Dendritic cell treated with granulocyte-macrophage colony-stimulating factor and Interleukin-4, amounts not matched to agents 40 ng/mL and 50 ng/mL, for 4 days (primary cell): ENCODE measurements at regions of chr3 and their contacts with region 1.

Region 1: GRCh38 chr3:25723802-25724201 is 59.1 kb upstream of the TOP2B start:
- H3K4me3 Mint-ChIP-seq: no peak overlapping the region
- H3K27ac Mint-ChIP-seq: no peak overlapping the region
- H3K4me1 Mint-ChIP-seq: no peaks in the 10 kb centered on the region
- H3K27me3 Mint-ChIP-seq: no peaks in the 10 kb centered on the region

Region 2: DNA sequence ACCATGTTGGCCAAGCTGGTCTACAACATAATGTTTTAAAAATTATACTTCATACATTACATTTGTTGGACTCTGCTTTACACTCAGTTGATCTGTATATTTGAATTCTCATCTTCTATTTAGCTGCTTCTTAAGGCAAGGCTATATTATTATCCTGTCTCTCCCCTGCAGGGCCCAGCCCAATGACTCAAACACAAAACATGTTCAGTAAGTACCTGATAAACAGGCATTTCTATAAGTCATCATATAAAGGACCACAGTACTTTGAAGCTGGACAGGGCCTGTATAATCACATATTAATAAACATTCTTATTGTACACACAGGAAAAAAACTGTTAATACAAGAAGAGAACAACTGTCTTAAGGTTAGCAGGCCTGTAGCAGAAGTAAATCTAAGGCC is 23.2 kb after region 1 on chr3:
- intact Hi-C with region 1: loop called (anchors 2 kb)
- H3K4me3 Mint-ChIP-seq: no peak overlapping the region
- H3K27ac Mint-ChIP-seq: no peak overlapping the region
- H3K4me1 Mint-ChIP-seq: peaks cover 53% of the 10 kb centered on the region
- H3K27me3 Mint-ChIP-seq: no peaks in the 10 kb centered on the region

Region 3: GRCh38 chr3:25856902-25857518 is 133.2 kb after region 1 on chr3:
- intact Hi-C with region 1: loop called (anchors 10 kb)
- H3K4me3 Mint-ChIP-seq: no peak overlapping the region
- H3K27ac Mint-ChIP-seq: no peak overlapping the region
- H3K4me1 Mint-ChIP-seq: no peaks in the 10 kb centered on the region
- H3K27me3 Mint-ChIP-seq: no peaks in the 10 kb centered on the region